Esophagus muscularis mucosa (tissue), 4 donors: ENCODE measurements at regions of chr3 and their contacts with region 1.

Region 1: GRCh38 chr3:155676252-155676981 is 68.5 kb downstream of the PLCH1 start:
- DNase-seq: no peak
- H3K4me3 ChIP-seq: peak overlapping the region in 2 of 4 donors; percentile 9 to 45
- H3K27ac ChIP-seq: no peak overlapping the region
- H3K4me1 ChIP-seq: no peaks in the 10 kb centered on the region
- H3K27me3 ChIP-seq: no peaks in the 10 kb centered on the region
- CTCF ChIP-seq: no peak
- EP300 ChIP-seq: no peak
- POLR2A ChIP-seq: no peak

Region 2: GRCh38 chr3:155110976-155111901 is 565.2 kb before region 1 on chr3:
- intact Hi-C with region 1: no loop called
- DNase-seq: no peak
- H3K4me3 ChIP-seq: no peak overlapping the region
- H3K27ac ChIP-seq: no peak overlapping the region
- H3K4me1 ChIP-seq: no peaks in the 10 kb centered on the region
- H3K27me3 ChIP-seq: no peaks in the 10 kb centered on the region
- CTCF ChIP-seq: no peak
- EP300 ChIP-seq: no peak
- POLR2A ChIP-seq: no peak

Region 3: DNA sequence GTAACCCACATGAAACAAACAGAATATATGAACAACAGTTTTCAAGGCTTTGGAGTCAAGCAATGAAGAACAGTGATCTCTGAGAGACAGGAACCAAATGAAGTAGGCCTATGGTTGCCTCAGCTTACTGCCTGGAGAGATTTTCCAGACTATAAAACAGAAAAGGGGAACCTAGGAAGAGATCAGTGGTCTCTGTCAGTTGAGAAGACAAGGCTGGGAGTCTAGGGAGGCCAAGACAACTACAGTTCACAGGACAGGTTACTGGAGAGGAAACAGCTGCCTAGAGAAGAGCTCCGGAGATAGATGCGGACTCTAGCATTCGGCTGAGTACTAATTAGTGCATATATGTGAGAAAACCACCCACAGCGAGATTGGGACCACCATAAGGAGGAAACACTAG is 19.3 kb before region 1 on chr3:
- intact Hi-C with region 1: loop called (anchors 1 kb)
- DNase-seq: no peak
- H3K4me3 ChIP-seq: no peak overlapping the region
- H3K27ac ChIP-seq: no peak overlapping the region
- H3K4me1 ChIP-seq: peaks cover 0 to 4% (median 2%) of the 10 kb centered on the region in 4 donors
- H3K27me3 ChIP-seq: no peaks in the 10 kb centered on the region
- CTCF ChIP-seq: no peak
- EP300 ChIP-seq: no peak
- POLR2A ChIP-seq: no peak